ENCODE measurements at regions of chr20 and their contacts with region 1.

Region 1: GRCh38 chr20:19212821-19213502 is 520 bp downstream of the SLC24A3 start:
- DNase-seq: peak; percentile 71
- H3K4me3 ChIP-seq: peak overlapping the region; percentile 37 to 72 (median 60)
- H3K27ac ChIP-seq: peak overlapping the region; percentile 75 to 83 (median 80)
- H3K4me1 ChIP-seq: peaks cover 0 to 21% (median 19%) of the 10 kb centered on the region in 4 donors
- H3K27me3 ChIP-seq: peaks cover 26% of the 10 kb centered on the region
- CTCF ChIP-seq: peak; percentile 29 to 60 (median 49)
- EP300 ChIP-seq: no peak
- POLR2A ChIP-seq: no peak

Region 2: GRCh38 chr20:19012676-19013075 is 200.3 kb before region 1 on chr20:
- in situ Hi-C with region 1: no loop called
- intact Hi-C with region 1: no loop called
- DNase-seq: no peak
- H3K4me3 ChIP-seq: no peak overlapping the region
- H3K27ac ChIP-seq: peak overlapping the region in 1 of 4 donors; percentile 18
- H3K4me1 ChIP-seq: peaks cover 0 to 3% (median 0%) of the 10 kb centered on the region in 4 donors
- H3K27me3 ChIP-seq: no peaks in the 10 kb centered on the region
- CTCF ChIP-seq: no peak
- EP300 ChIP-seq: no peak
- POLR2A ChIP-seq: no peak

Region 3: DNA sequence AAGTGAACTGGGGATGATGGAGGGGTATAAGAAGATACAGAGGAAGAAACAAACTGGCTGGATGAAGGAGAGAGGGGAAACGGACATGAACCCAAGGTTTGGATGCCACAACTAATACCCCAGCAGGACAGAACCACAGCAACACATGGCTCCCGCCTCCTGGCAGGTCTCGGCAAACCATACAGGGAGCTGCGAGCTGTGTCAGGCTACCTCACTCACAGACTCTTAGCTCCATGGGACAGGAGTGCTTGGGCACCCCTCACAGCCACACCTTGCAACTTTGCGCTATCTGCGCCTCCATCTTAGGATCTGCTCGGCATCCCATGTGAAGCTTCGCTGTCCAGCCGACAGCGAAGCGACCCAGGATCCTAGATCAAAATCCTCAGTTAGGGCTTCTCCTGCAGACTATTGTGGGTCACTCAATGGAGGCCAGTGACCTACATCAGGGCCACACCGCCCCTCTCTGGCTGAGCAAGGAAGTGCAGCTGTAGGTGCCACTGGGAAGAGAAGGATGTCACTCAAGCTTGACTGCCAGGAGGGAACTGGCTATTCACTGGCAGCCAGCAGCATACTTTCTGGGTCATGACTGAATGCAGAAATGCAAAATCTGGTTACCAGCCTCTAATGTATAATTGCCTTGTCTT is 370.7 kb after region 1 on chr20:
- in situ Hi-C with region 1: loop called in 3 of 4 experiments (anchors 10 to 25 kb)
- intact Hi-C with region 1: loop called (anchors 5 kb)
- DNase-seq: peak; percentile 70
- H3K4me3 ChIP-seq: no peak overlapping the region
- H3K27ac ChIP-seq: no peak overlapping the region
- H3K4me1 ChIP-seq: no peaks in the 10 kb centered on the region
- H3K27me3 ChIP-seq: no peaks in the 10 kb centered on the region
- CTCF ChIP-seq: peak; percentile 68 to 84 (median 78)
- EP300 ChIP-seq: no peak
- POLR2A ChIP-seq: no peak